ENCODE measurements at regions of chrX and their contacts with region 1.

Region 1: GRCh38 chrX:119067023-119067739 is 5.6 kb upstream of the CT47C1 start:
- DNase-seq: peak in 1 of 2 experiments; percentile 59
- H3K4me3 ChIP-seq: no peak overlapping the region
- H3K27ac ChIP-seq: no peak overlapping the region
- H3K4me1 ChIP-seq: peaks cover 0 to 3% (median 0%) of the 10 kb centered on the region in 4 experiments; a peak in 2 of 7 replicates
- H3K27me3 ChIP-seq: no peaks in the 10 kb centered on the region
- CTCF ChIP-seq: peak; percentile 50 to 68 (median 57)
- EP300 ChIP-seq: no peak
- POLR2A ChIP-seq: no peak
- RAD21 ChIP-seq: peak; percentile 76 to 84

Region 2: GRCh38 chrX:118990512-118991227 is 76.5 kb before region 1 on chrX:
- CTCF ChIA-PET with region 1: no interaction called
- POLR2A ChIA-PET with region 1: no interaction called
- DNase-seq: no peak
- H3K4me3 ChIP-seq: no peak overlapping the region
- H3K27ac ChIP-seq: no peak overlapping the region
- H3K4me1 ChIP-seq: peaks cover 0 to 5% (median 1%) of the 10 kb centered on the region in 4 experiments; a peak in 3 of 7 replicates
- H3K27me3 ChIP-seq: no peaks in the 10 kb centered on the region
- CTCF ChIP-seq: no peak
- EP300 ChIP-seq: no peak
- POLR2A ChIP-seq: no peak
- RAD21 ChIP-seq: no peak

Region 3: DNA sequence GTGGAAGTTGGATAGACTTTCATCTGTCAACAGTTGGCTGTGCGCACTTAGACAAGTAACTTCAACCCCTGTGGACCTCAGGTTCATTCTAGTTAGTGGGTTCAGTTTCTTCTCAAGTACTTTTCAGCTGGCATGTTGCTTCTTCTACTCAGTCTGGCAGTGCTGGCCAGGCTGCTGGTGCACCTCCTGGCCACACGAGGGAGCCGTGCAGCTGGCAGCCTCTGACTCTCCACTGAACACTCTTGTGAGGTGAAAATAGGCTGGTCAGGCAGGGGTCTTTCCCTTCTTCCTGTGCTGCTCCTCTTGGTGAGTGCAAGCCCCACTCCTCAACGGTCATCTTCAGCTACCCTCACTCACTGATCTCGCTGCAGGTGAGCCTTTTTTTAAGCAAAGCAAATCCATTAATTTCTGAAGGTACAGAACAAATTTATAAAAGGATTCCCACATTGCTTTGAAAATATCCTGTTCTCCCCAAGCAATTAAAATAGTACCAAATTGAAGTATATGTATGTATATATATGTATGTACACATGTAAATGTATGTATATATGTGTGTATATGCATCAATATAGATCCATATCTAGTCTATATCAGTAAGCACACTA is 62.2 kb before region 1 on chrX:
- CTCF ChIA-PET with region 1: interaction called, 14 read pairs
- POLR2A ChIA-PET with region 1: no interaction called
- DNase-seq: peak in 1 of 2 experiments; percentile 62
- H3K4me3 ChIP-seq: no peak overlapping the region
- H3K27ac ChIP-seq: no peak overlapping the region
- H3K4me1 ChIP-seq: no peaks in the 10 kb centered on the region
- H3K27me3 ChIP-seq: no peaks in the 10 kb centered on the region
- CTCF ChIP-seq: peak; percentile 71 to 88 (median 85)
- EP300 ChIP-seq: no peak
- POLR2A ChIP-seq: no peak
- RAD21 ChIP-seq: peak; percentile 63 to 69

Measured in H1 (cell line).